ENCODE measurements at regions of chr20 and their contacts with region 1.

Region 1: GRCh38 chr20:62088237-62089127 is 22.8 kb upstream of the TAF4 start:
- DNase-seq: peak; percentile 97
- ATAC-seq: peak; percentile 99
- H3K4me3 ChIP-seq: no peak overlapping the region
- H3K27ac ChIP-seq: no peak overlapping the region
- H3K4me1 ChIP-seq: peaks cover 14% of the 10 kb centered on the region
- H3K27me3 ChIP-seq: no peaks in the 10 kb centered on the region; the same call in 1 of the 2 replicates
- CTCF ChIP-seq: no peak

Region 2: GRCh38 chr20:61414455-61414991 is 674.0 kb before region 1 on chr20:
- CTCF ChIA-PET with region 1: no interaction called
- POLR2A ChIA-PET with region 1: no interaction called
- in situ Hi-C with region 1: no loop called
- intact Hi-C with region 1: no loop called
- DNase-seq: no peak
- ATAC-seq: no peak
- H3K4me3 ChIP-seq: no peak overlapping the region
- H3K27ac ChIP-seq: no peak overlapping the region
- H3K4me1 ChIP-seq: no peaks in the 10 kb centered on the region
- H3K27me3 ChIP-seq: no peaks in the 10 kb centered on the region
- CTCF ChIP-seq: no peak

Region 3: GRCh38 chr20:62121776-62122631 is 33.5 kb after region 1 on chr20 and contains the start of gene LSM14B:
- CTCF ChIA-PET with region 1: no interaction called
- POLR2A ChIA-PET with region 1: interaction called, 11 read pairs
- in situ Hi-C with region 1: no loop called
- intact Hi-C with region 1: no loop called
- DNase-seq: peak; percentile 65
- ATAC-seq: peak; percentile 90
- H3K4me3 ChIP-seq: peak within 1 kb of the TSS; percentile 70 to 80
- H3K27ac ChIP-seq: peak within 1 kb of the TSS; percentile 90
- H3K4me1 ChIP-seq: peaks cover 22% of the 10 kb centered on the region
- H3K27me3 ChIP-seq: no peaks in the 10 kb centered on the region
- CTCF ChIP-seq: no peak
- total RNA-seq, gene LSM14B: 52.2 TPM

Measured in Panc1 (cell line).